Transverse colon (tissue), 4 donors: ENCODE measurements at regions of chr16 and their contacts with region 1.

Region 1: GRCh38 chr16:8878521-8878911 is 3.6 kb upstream of the LITAFD start:
- DNase-seq: no peak
- H3K4me3 ChIP-seq: no peak overlapping the region
- H3K27ac ChIP-seq: peak overlapping the region in 2 of 4 donors; percentile 4 to 62
- H3K4me1 ChIP-seq: peaks cover 0 to 13% (median 4%) of the 10 kb centered on the region in 4 donors
- H3K27me3 ChIP-seq: no peaks in the 10 kb centered on the region
- CTCF ChIP-seq: no peak
- EP300 ChIP-seq: no peak
- POLR2A ChIP-seq: no peak

Region 2: DNA sequence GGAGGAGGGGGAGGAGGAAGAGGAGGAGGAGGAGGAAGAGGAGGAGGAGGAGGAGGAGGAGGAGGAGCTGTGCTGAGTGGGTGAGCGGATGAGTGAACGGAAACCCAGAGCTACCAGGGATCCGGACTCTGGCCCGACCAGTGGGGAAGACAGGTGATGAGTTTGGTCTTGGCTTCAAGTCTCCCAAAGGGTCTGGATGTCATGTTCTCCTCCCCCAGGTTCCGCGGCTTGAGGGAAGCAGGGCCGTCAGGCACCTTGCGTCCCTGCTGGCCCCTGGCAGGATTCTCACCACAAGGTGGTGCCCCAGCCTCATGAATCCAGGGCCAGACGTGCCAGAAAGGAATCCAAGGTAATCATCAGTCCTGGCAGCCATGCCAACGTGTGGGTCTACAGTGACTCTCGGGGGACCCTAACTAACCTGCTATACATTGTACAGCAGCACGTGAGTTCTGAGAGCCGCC is 217.6 kb before region 1 on chr16:
- in situ Hi-C with region 1: loop called (anchors 10 to 25 kb)
- intact Hi-C with region 1: loop called (anchors 5 kb)
- DNase-seq: peak; percentile 73
- H3K4me3 ChIP-seq: no peak overlapping the region
- H3K27ac ChIP-seq: no peak overlapping the region
- H3K4me1 ChIP-seq: no peaks in the 10 kb centered on the region
- H3K27me3 ChIP-seq: no peaks in the 10 kb centered on the region
- CTCF ChIP-seq: peak; percentile 50 to 82 (median 65)
- EP300 ChIP-seq: no peak
- POLR2A ChIP-seq: no peak

Region 3: DNA sequence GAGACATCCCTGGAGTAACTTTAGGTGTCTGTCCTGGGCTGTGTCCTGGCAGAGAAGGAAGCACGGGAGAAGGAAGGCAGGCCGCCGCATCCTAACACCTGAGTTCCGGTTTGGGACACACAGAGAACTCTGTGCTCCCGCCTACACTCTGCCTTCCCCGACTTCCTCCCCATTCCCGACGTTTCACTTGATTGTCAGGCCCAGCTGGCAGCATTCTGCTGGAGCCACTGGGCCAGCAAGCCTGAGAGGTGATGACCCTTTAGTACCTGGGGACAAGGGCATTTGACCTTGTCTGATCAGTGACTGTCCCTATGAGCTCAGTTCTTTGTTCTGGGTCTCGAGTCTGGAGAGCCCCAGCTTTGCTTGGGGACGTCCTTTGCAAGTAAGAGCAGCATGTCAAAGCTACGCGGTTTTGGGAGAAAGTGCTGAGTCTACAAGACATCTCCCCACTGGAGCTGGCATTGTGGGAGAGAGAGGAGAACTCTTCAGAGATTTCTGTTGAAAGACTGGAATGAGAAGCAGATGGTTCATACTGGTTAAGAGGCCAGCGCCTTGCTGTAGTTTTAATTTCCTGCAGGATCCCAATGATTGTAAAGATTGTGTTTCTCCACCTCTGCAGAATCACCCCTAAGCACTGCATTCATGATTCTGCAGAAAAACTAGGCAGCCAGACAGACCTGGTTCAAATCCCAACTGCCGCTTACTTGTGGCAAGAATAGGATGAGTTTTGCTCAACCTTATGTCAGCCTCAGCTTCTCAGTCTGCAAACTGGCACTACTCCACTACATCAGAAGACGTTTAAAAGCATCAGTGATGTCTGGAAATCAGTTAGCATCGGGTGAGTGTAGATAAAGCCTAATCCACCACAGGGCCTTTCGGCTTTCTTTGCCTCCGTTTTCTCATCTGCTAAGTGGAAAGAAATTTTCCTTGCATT is 183.5 kb before region 1 on chr16:
- in situ Hi-C with region 1: no loop called
- intact Hi-C with region 1: no loop called
- DNase-seq: no peak
- H3K4me3 ChIP-seq: no peak overlapping the region
- H3K27ac ChIP-seq: no peak overlapping the region
- H3K4me1 ChIP-seq: no peaks in the 10 kb centered on the region
- H3K27me3 ChIP-seq: no peaks in the 10 kb centered on the region
- CTCF ChIP-seq: no peak
- EP300 ChIP-seq: no peak
- POLR2A ChIP-seq: no peak

Region 4: DNA sequence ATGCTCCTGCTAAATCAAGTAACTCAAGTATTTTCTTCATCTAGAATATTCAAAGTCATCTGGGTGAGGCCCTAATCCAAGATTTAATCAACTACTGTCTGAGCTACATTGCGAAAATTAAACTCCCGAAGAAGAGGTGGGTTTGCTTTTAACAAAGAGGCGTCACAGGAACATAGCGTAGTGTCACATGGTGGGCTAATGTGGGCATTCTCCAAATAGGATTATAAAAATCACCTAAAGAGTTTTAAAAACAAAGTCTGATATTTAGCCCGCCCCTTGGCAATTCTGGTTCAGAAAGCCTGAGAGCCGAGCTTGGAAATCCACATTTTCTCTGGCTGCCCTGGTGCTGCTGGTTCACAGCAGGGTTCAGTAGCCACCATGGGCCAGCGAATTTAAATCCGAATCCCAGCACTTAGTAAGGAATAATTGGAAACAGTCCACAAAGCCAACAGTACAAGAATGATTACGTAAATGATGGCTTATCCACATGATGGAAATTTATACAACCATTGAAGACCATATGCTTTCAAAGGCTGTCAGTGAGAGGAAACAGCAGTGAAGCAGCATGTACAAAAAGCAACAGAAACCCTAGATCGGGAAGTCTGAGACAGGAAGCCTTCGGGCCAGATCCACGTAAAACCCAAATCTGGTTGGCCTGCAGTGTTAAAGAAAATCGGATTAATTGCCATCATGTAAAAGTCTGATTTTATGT is 72.1 kb before region 1 on chr16:
- in situ Hi-C with region 1: loop called in 1 of 4 experiments (anchors 10 kb)
- intact Hi-C with region 1: no loop called
- DNase-seq: no peak
- H3K4me3 ChIP-seq: no peak overlapping the region
- H3K27ac ChIP-seq: no peak overlapping the region
- H3K4me1 ChIP-seq: peaks cover 0 to 6% (median 2%) of the 10 kb centered on the region in 4 donors
- H3K27me3 ChIP-seq: no peaks in the 10 kb centered on the region
- CTCF ChIP-seq: no peak
- EP300 ChIP-seq: no peak
- POLR2A ChIP-seq: no peak